PC-3 (cell line): ENCODE measurements at regions of chr10 and their contacts with region 1.

Region 1: DNA sequence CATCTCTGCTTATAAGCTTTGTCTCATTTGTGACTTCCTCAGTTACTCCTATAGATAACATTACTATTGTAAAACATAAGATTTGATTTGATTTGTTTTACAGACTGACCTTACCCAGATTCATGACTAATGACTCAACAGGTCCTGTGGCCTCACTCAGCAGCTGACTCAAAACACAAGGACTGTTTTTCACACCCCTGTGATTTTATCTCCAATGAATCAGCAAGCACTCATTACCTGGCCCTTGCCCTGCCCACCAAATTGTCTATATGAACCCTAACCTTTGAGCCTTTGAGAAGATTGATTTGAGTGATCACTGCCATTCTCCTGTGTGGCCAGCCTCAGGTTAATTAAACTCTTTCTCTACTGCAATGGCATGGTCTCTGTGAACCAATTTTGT is 1064.6 kb upstream of the LRRTM3 start:
- DNase-seq: peak; percentile 92
- ATAC-seq: peak; percentile 99
- H3K4me3 ChIP-seq: no peak overlapping the region
- H3K27ac ChIP-seq: peak overlapping the region; percentile 20
- H3K4me1 ChIP-seq: peaks cover 15% of the 10 kb centered on the region
- H3K27me3 ChIP-seq: no peaks in the 10 kb centered on the region
- CTCF ChIP-seq: no peak

Region 2: GRCh38 chr10:65769828-65770227 is 91.4 kb before region 1 on chr10:
- CTCF ChIA-PET with region 1: no interaction called
- POLR2A ChIA-PET with region 1: no interaction called
- intact Hi-C with region 1: no loop called
- DNase-seq: no peak
- ATAC-seq: no peak
- H3K4me3 ChIP-seq: no peak overlapping the region
- H3K27ac ChIP-seq: no peak overlapping the region
- H3K4me1 ChIP-seq: no peaks in the 10 kb centered on the region
- H3K27me3 ChIP-seq: no peaks in the 10 kb centered on the region
- CTCF ChIP-seq: no peak

Region 3: GRCh38 chr10:65798133-65798532 is 63.1 kb before region 1 on chr10:
- CTCF ChIA-PET with region 1: no interaction called
- POLR2A ChIA-PET with region 1: no interaction called
- intact Hi-C with region 1: no loop called
- DNase-seq: no peak
- ATAC-seq: no peak
- H3K4me3 ChIP-seq: no peak overlapping the region
- H3K27ac ChIP-seq: no peak overlapping the region
- H3K4me1 ChIP-seq: no peaks in the 10 kb centered on the region
- H3K27me3 ChIP-seq: no peaks in the 10 kb centered on the region
- CTCF ChIP-seq: no peak

Region 4: GRCh38 chr10:65891073-65891981 is 30.1 kb after region 1 on chr10:
- CTCF ChIA-PET with region 1: no interaction called
- POLR2A ChIA-PET with region 1: no interaction called
- intact Hi-C with region 1: loop called (anchors 2 kb)
- DNase-seq: peak; percentile 90
- ATAC-seq: peak; percentile 98
- H3K4me3 ChIP-seq: peak overlapping the region; percentile 6; the same call in 1 of the 2 replicates
- H3K27ac ChIP-seq: peak overlapping the region; percentile 74
- H3K4me1 ChIP-seq: peaks cover 21% of the 10 kb centered on the region
- H3K27me3 ChIP-seq: no peaks in the 10 kb centered on the region
- CTCF ChIP-seq: no peak

Region 5: GRCh38 chr10:66045859-66046258 is 184.6 kb after region 1 on chr10:
- CTCF ChIA-PET with region 1: no interaction called
- POLR2A ChIA-PET with region 1: no interaction called
- intact Hi-C with region 1: no loop called
- DNase-seq: peak; percentile 28
- ATAC-seq: no peak
- H3K4me3 ChIP-seq: no peak overlapping the region
- H3K27ac ChIP-seq: no peak overlapping the region
- H3K4me1 ChIP-seq: no peaks in the 10 kb centered on the region
- H3K27me3 ChIP-seq: no peaks in the 10 kb centered on the region
- CTCF ChIP-seq: no peak